ENCODE measurements at regions of chr6 and their contacts with region 1.

Region 1: DNA sequence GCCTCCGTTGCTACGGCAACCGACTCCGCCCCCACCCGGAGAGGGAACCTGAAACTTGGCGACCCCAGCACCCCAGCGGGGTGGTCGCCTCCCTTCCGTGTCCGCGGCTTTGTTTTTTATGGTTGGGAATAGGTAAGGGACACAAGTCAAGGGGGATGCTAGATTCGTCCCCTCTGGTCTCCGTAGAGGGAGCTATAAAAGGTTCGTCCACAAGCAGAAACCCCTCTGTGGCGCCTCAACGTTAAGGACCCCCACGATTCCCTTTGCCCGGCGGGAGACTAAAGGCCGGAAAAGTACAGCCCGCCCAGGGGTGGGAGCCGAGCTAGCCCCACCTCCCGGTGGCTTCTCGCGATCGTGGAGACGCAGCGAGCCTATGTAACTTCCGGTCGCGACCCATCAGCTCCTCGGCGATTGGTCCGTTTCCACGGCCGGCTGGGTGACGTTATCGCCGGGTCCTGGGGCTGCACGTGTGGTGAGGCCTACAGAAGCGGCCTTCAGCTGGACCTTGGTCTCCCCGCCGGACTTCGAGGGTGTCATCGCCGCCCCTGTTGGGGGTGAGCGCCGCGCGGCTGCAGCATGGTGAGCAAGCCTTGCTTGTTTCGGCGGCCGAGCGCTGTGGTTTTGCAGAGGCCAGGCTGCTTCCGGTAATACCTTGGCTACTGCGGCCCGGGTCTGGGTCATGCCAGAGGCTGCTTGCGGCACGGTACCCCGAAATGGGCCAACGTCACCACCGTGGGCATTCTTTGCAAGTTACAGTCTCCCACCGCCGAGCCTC is at the start of gene LTV1:
- DNase-seq: peak; percentile 96
- ATAC-seq: peak; percentile 99
- H3K4me3 ChIP-seq: peak within 1 kb of the TSS; percentile 86
- H3K27ac ChIP-seq: peak within 1 kb of the TSS; percentile 88
- H3K4me1 ChIP-seq: peaks cover 3% of the 10 kb centered on the region; the same call in 1 of the 2 replicates
- H3K27me3 ChIP-seq: no peaks in the 10 kb centered on the region
- CTCF ChIP-seq: no peak
- POLR2A ChIP-seq: peak; percentile 89
- RAD21 ChIP-seq: no peak
- total RNA-seq, gene LTV1: 11.1 and 26.1 TPM in 2 replicates

Region 2: DNA sequence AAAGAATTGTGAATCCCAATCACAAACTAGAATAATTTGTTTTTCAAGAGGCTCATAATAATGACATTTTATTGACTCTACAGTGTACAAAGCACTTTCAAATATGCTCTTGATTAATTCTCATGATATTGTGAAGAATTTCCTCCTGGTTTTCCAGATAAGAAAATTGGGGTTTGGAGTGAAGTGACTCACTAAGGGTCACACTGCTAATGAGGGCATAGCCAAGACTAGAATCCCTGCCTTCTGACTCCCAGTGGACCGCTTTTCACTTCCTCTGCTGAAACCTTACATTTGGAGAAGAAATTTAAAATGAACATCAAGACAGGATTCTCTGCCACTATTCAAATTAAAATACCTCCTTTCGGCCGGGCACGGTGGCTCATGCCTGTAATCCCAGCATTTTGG is 38.3 kb before region 1 on chr6:
- CTCF ChIA-PET with region 1: no interaction called
- POLR2A ChIA-PET with region 1: no interaction called
- dilution Hi-C with region 1: no loop called
- in situ Hi-C with region 1: no loop called
- intact Hi-C with region 1: loop called (anchors 2 kb)
- DNase-seq: no peak
- ATAC-seq: no peak
- H3K4me3 ChIP-seq: no peak overlapping the region
- H3K27ac ChIP-seq: no peak overlapping the region
- H3K4me1 ChIP-seq: peaks cover 17% of the 10 kb centered on the region
- H3K27me3 ChIP-seq: no peaks in the 10 kb centered on the region
- CTCF ChIP-seq: no peak
- POLR2A ChIP-seq: no peak
- RAD21 ChIP-seq: no peak

Region 3: DNA sequence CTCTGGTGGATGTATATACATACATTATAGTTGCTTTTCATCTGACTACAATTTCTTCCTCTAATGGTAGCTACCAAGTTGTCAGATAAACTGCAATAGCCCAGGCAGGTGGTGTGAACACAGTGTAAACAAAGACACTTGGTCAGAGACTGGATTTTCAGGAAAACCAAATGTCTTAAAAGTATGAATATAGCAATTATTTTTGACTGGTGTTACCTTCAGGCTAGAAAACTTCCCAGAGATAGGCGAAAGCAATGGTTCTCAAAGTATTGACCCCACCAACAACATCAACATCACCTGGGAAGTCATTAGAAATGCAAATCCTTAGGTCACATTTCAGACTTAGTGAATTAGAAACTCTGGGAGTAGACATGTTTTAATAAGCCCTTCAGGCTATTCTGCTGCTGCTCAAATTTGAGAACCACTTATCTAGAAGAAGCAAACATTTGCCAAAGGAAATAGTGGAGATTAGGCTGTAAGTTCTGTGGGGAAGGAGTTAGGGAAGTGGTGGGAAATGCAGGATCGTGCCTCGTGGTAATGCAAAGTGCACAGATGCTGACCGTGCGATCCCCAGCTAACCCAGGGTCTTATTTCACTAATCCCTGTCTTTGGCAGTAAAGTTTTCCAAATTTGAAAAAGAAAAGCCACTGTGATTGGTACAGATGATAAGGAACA is 1563.6 kb after region 1 on chr6:
- CTCF ChIA-PET with region 1: no interaction called
- POLR2A ChIA-PET with region 1: no interaction called
- dilution Hi-C with region 1: no loop called
- in situ Hi-C with region 1: no loop called
- intact Hi-C with region 1: no loop called
- DNase-seq: no peak
- ATAC-seq: no peak
- H3K4me3 ChIP-seq: no peak overlapping the region
- H3K27ac ChIP-seq: no peak overlapping the region
- H3K4me1 ChIP-seq: no peaks in the 10 kb centered on the region
- H3K27me3 ChIP-seq: no peaks in the 10 kb centered on the region
- CTCF ChIP-seq: no peak
- POLR2A ChIP-seq: no peak
- RAD21 ChIP-seq: no peak

Measured in IMR-90 (cell line).